ENCODE measurements at regions of chr11 and their contacts with region 1.

Region 1: GRCh38 chr11:123511037-123511870 is 81.2 kb downstream of the GRAMD1B start:
- DNase-seq: peak; percentile 86
- ATAC-seq: peak; percentile 90 to 98

Region 2: GRCh38 chr11:123549926-123550917 is 39.0 kb after region 1 on chr11:
- intact Hi-C with region 1: loop called in 1 of 2 experiments (anchors 5 kb)
- DNase-seq: no peak
- ATAC-seq: no peak

Region 3: GRCh38 chr11:123560006-123560405 is 48.8 kb after region 1 on chr11:
- intact Hi-C with region 1: loop called in 1 of 2 experiments (anchors 5 kb)
- DNase-seq: peak; percentile 62
- ATAC-seq: peak; percentile 91 to 93

Region 4: GRCh38 chr11:123580557-123581275 is 69.5 kb after region 1 on chr11:
- intact Hi-C with region 1: loop called (anchors 5 kb)
- DNase-seq: peak; percentile 54
- ATAC-seq: peak; percentile 50 to 74

Measured in left cardiac atrium (tissue), 4 donors.